HCT116 (cell line): ENCODE measurements at regions of chr12 and their contacts with region 1.

Region 1: GRCh38 chr12:125183187-125184067 is 118.2 kb downstream of the AACS start:
- DNase-seq: peak; percentile 45
- ATAC-seq: peak; percentile 72
- H3K4me3 ChIP-seq: peak overlapping the region in 1 of 2 experiments; percentile 24; a peak in 1 of 4 replicates
- H3K27ac ChIP-seq: no peak overlapping the region
- H3K4me1 ChIP-seq: peaks cover 0 to 16% of the 10 kb centered on the region in 2 experiments; a peak in 2 of 4 replicates
- H3K27me3 ChIP-seq: peaks cover 11% of the 10 kb centered on the region; the same call in 1 of the 2 replicates
- CTCF ChIP-seq: peak; percentile 91 to 99 (median 97)
- POLR2A ChIP-seq: no peak
- RAD21 ChIP-seq: peak; percentile 98

Region 2: GRCh38 chr12:125193798-125194773 is 10.7 kb after region 1 on chr12:
- CTCF ChIA-PET with region 1: no interaction called
- POLR2A ChIA-PET with region 1: no interaction called
- RAD21 ChIA-PET with region 1: no interaction called
- intact Hi-C with region 1: no loop called
- DNase-seq: no peak
- ATAC-seq: peak; percentile 62
- H3K4me3 ChIP-seq: no peak overlapping the region
- H3K27ac ChIP-seq: no peak overlapping the region
- H3K4me1 ChIP-seq: peaks cover 0 to 8% of the 10 kb centered on the region in 2 experiments; a peak in 3 of 4 replicates
- H3K27me3 ChIP-seq: peaks cover 52% of the 10 kb centered on the region
- CTCF ChIP-seq: no peak
- POLR2A ChIP-seq: no peak
- RAD21 ChIP-seq: no peak

Region 3: DNA sequence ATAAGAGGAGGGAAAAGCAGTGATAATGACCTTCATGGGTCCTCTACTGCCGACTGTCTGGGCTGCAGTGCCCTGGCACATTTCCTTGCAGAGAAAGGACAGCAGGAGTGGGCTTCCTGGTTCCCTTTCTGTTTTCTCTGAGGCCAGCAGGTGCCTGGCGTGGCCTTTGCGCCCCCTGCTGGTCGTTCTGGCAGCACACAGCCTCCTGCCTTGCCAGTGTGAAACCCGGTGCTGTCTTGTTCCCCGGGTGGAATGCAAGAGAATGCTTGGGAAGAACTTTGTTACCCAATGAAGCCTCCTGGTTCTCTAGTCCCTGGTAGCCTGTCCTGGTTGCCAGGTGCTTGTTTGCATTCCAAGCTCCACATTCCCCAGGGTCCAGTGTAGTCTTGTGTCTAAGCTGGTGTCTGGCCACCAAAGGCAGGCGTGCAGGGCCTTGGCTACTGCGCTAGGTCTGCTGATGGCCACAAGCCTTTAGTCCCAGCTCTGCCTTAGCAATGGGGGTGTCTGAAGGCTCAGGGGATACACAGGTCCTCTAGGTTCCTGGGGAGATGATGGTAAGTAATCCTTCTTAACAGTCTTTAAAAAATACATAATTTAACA is 1691.1 kb after region 1 on chr12:
- CTCF ChIA-PET with region 1: no interaction called
- POLR2A ChIA-PET with region 1: no interaction called
- RAD21 ChIA-PET with region 1: no interaction called
- intact Hi-C with region 1: loop called (anchors 2 kb)
- DNase-seq: peak; percentile 50
- ATAC-seq: peak; percentile 99
- H3K4me3 ChIP-seq: no peak overlapping the region
- H3K27ac ChIP-seq: no peak overlapping the region
- H3K4me1 ChIP-seq: no peaks in the 10 kb centered on the region
- H3K27me3 ChIP-seq: 0 out of 2 replicates have a peak, but pooled peaks cover under 1% of the 10 kb centered on the region
- CTCF ChIP-seq: peak; percentile 69 to 99 (median 93); a peak in 5 of 6 replicates
- POLR2A ChIP-seq: no peak
- RAD21 ChIP-seq: peak; percentile 86